ENCODE measurements at regions of chr16 and their contacts with region 1.

Region 1: GRCh38 chr16:56608043-56608875 is at the start of gene MT2A:
- DNase-seq: peak; percentile 97
- H3K4me3 Mint-ChIP-seq: peak within 1 kb of the TSS; percentile 93
- H3K27ac Mint-ChIP-seq: peak within 1 kb of the TSS; percentile 99
- H3K4me1 Mint-ChIP-seq: peaks cover 50% of the 10 kb centered on the region
- H3K27me3 Mint-ChIP-seq: no peaks in the 10 kb centered on the region
- CTCF ChIP-seq: no peak
- total RNA-seq, gene MT2A: 2,490 and 3,582 TPM in 2 replicates

Region 2: GRCh38 chr16:56332464-56333079 is 275.7 kb before region 1 on chr16:
- CTCF ChIA-PET with region 1: no interaction called
- POLR2A ChIA-PET with region 1: no interaction called
- intact Hi-C with region 1: no loop called
- DNase-seq: peak; percentile 88
- H3K4me3 Mint-ChIP-seq: no peak overlapping the region
- H3K27ac Mint-ChIP-seq: no peak overlapping the region
- H3K4me1 Mint-ChIP-seq: peaks cover 15% of the 10 kb centered on the region
- H3K27me3 Mint-ChIP-seq: no peaks in the 10 kb centered on the region
- CTCF ChIP-seq: peak; percentile 70

Region 3: GRCh38 chr16:56370877-56371659 is 237.2 kb before region 1 on chr16:
- CTCF ChIA-PET with region 1: no interaction called
- POLR2A ChIA-PET with region 1: no interaction called
- intact Hi-C with region 1: no loop called
- DNase-seq: peak; percentile 25
- H3K4me3 Mint-ChIP-seq: no peak overlapping the region
- H3K27ac Mint-ChIP-seq: no peak overlapping the region
- H3K4me1 Mint-ChIP-seq: peaks cover 13% of the 10 kb centered on the region
- H3K27me3 Mint-ChIP-seq: no peaks in the 10 kb centered on the region
- CTCF ChIP-seq: no peak

Region 4: DNA sequence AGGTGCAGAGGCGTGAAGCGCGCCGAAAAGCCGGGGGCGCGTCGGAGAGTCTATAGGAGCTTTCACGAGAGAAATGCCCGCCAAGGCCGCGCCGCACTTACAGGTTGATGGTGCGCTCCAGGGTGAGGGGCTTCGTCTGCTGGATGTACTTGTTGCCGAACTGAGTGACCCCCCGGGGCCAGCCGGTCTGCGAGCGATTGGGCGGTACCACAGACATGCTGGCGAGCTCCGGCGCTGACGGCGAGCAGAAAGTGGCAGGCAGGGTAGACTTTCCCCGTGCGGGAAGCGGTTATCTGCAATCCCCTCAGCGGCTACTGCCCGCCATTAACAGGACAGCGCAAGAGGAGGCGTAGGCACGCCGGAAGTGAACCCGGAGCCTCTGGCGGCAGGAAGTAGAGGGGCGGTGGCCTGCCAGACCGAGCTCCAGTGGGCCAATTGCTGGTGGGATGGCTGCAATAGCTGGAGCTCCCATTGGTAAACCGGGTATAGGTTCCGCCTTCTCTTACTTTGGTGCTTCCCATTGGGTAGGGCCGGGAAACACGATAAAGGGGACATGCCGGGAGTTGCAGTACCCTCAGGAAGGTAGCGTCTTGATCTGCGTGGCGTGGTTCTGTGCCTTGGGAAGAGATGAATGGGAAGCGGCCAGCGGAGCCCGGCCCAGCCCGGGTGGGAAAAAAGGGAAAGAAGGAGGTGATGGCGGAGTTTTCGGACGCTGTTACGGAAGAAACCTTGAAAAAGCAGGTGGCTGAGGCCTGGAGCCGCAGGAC is 157.1 kb before region 1 on chr16 and contains the starts of genes NUDT21 and OGFOD1:
- CTCF ChIA-PET with region 1: no interaction called
- POLR2A ChIA-PET with region 1: interaction called, 35 read pairs
- intact Hi-C with region 1: no loop called
- DNase-seq: peak; percentile 98
- H3K4me3 Mint-ChIP-seq: peak within 1 kb of the TSS; percentile 83
- H3K27ac Mint-ChIP-seq: peak within 1 kb of the TSS; percentile 80
- H3K4me1 Mint-ChIP-seq: peaks cover 24% of the 10 kb centered on the region
- H3K27me3 Mint-ChIP-seq: no peaks in the 10 kb centered on the region
- CTCF ChIP-seq: no peak
- total RNA-seq, gene NUDT21: 81.7 and 83.4 TPM in 2 replicates
- total RNA-seq, gene OGFOD1: 68.5 and 72.5 TPM in 2 replicates

Region 5: DNA sequence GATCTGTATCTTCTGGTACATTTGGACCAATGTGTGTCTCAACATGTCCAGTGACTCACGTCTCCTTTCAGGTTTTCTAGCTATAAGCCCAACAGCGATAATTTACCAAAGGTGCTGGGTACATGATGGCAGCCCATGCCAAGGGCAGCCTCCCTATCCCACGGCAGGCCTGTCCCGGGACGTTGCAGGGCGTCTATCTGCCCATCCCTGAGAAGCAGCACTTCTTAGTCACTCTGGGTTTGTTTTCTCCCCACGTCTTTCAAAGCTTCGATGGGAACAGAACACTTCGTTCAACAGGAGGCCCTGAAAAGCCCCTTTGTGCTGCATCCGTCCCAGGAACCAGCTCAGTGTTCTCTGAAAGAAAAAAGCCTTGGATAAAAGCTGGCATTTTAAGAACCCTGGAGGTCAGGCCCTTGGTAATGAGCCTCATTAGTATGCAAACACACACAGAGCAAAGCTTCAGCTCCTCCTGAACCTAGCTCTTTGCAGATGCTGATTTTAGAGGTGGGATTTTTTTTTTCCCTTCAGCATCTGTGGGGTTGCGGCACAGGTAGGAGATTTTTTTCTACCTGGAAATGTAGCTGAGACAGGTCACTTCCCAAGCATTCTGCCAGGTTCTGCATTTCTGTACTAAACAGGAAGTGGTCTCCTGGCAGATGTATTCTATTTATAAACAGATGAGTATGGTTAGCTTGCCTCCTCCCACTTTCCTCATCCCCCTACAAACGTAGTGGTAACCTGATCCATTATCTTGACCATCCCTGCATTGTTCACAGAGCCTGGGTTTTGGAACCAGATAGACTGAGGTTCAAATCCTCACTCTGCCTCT is 60.9 kb before region 1 on chr16:
- CTCF ChIA-PET with region 1: interaction called, 11 read pairs
- POLR2A ChIA-PET with region 1: interaction called, 20 read pairs
- intact Hi-C with region 1: no loop called
- DNase-seq: peak; percentile 60
- H3K4me3 Mint-ChIP-seq: no peak overlapping the region
- H3K27ac Mint-ChIP-seq: no peak overlapping the region
- H3K4me1 Mint-ChIP-seq: peaks cover 20% of the 10 kb centered on the region
- H3K27me3 Mint-ChIP-seq: no peaks in the 10 kb centered on the region
- CTCF ChIP-seq: no peak

Region 6: GRCh38 chr16:56625140-56625942 is 17.1 kb after region 1 on chr16 and contains the start of gene MT1E:
- CTCF ChIA-PET with region 1: interaction called, 6 read pairs
- POLR2A ChIA-PET with region 1: interaction called, 1,404 read pairs
- intact Hi-C with region 1: loop called (anchors 1 kb)
- DNase-seq: peak; percentile 81
- H3K4me3 Mint-ChIP-seq: peak within 1 kb of the TSS; percentile 95
- H3K27ac Mint-ChIP-seq: peak within 1 kb of the TSS; percentile 81
- H3K4me1 Mint-ChIP-seq: peaks cover 11% of the 10 kb centered on the region
- H3K27me3 Mint-ChIP-seq: no peaks in the 10 kb centered on the region
- CTCF ChIP-seq: no peak
- total RNA-seq, gene MT1E: 518 and 934 TPM in 2 replicates

Region 7: GRCh38 chr16:56649820-56650219 is 41.6 kb after region 1 on chr16:
- CTCF ChIA-PET with region 1: no interaction called
- POLR2A ChIA-PET with region 1: interaction called, 50 read pairs
- intact Hi-C with region 1: no loop called
- DNase-seq: peak; percentile 90
- H3K4me3 Mint-ChIP-seq: no peak overlapping the region
- H3K27ac Mint-ChIP-seq: no peak overlapping the region
- H3K4me1 Mint-ChIP-seq: peaks cover 10% of the 10 kb centered on the region
- H3K27me3 Mint-ChIP-seq: no peaks in the 10 kb centered on the region
- CTCF ChIP-seq: no peak

Region 8: GRCh38 chr16:56681939-56682702 is 73.9 kb after region 1 on chr16 and contains the start of gene MT1X:
- CTCF ChIA-PET with region 1: interaction called, 9 read pairs
- POLR2A ChIA-PET with region 1: interaction called, 793 read pairs
- intact Hi-C with region 1: no loop called
- DNase-seq: peak; percentile 95
- H3K4me3 Mint-ChIP-seq: peak within 1 kb of the TSS; percentile 70
- H3K27ac Mint-ChIP-seq: peak within 1 kb of the TSS; percentile 67
- H3K4me1 Mint-ChIP-seq: peaks cover 26% of the 10 kb centered on the region
- H3K27me3 Mint-ChIP-seq: no peaks in the 10 kb centered on the region
- CTCF ChIP-seq: no peak
- total RNA-seq, gene MT1X: 79.3 and 108 TPM in 2 replicates

Measured in MCF 10A (cell line).